ENCODE measurements at regions of chr21 and their contacts with region 1.

Region 1: DNA sequence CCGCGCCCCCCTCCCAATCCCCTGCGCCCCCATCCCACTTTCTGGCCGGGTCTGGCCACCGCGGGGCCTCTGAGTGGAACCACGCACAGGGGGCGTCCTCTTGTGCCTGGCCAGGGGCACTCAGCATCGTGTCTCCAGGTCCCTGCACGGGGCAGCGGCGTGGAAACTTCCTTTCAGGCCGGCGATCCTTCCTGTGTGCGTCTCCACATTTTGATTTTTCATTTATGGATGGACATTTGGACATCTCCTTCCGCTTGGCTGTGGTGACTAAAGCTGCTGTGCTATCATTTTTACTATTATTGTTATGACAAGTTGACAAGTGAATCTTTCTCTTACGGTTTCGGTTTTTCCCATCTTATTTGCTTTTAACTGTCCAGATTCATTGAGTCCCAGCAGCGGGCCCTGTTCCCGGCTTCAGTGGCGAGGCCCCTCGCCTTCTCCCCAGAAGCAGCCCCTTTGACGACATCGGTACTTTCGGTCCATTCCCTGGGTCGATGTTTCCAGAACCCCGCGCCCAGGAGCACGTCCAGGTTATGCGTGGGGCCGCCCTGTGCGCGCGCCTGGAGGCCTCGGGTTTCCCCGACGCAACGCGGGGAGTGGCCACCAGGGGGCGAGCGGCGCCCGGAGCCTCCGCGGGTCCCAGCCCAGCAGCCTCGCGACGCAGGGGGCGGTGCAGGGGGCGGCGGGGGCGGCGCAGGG is 12.4 kb upstream of the SLC19A1 start:
- DNase-seq: peak; percentile 66 to 97 (median 88)

Region 2: GRCh38 chr21:45055861-45056260 is 498.8 kb before region 1 on chr21:
- intact Hi-C with region 1: no loop called
- DNase-seq: no peak

Region 3: DNA sequence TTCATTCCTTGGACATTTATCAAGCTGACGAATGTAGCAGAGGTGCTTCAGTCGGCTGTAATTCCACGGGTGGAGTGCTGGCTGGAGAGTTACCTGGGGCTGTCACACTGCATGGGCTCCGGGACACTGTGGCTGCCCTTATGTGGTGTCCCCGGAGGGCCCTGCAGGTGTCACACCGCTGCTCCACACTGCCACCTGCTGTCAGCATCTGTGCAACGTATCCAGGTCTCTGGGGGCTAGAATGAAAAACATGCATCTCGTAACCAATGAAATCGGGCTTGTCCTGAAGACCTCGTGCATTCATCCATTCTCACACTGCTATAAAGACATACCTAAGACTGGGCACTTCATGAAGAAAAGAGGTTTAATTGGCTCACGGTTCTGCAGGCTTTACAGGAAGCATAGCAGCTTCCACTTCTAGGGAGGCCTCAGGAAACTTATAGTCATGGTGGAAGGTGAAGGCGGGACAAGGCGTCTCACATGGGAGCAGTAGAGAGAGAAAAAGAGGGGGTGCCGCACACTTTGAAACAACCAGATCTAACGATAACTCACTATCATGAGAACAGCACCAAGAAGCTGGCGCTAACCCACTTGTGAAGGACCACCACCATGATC is 42.2 kb after region 1 on chr21:
- intact Hi-C with region 1: loop called (anchors 1 kb)
- DNase-seq: peak in 8 of 10 donors; percentile 43 to 91 (median 68)

Region 4: GRCh38 chr21:45820171-45821091 is 265.8 kb after region 1 on chr21:
- intact Hi-C with region 1: loop called (anchors 2 kb)
- DNase-seq: peak; percentile 60 to 97 (median 82)

Region 5: GRCh38 chr21:45923146-45923545 is 368.5 kb after region 1 on chr21:
- intact Hi-C with region 1: loop called (anchors 2 kb)
- DNase-seq: peak; percentile 70 to 98 (median 82)

Measured in posterior cingulate gyrus (tissue), 11 donors.